ENCODE measurements at regions of chr6 and their contacts with region 1.

Region 1: DNA sequence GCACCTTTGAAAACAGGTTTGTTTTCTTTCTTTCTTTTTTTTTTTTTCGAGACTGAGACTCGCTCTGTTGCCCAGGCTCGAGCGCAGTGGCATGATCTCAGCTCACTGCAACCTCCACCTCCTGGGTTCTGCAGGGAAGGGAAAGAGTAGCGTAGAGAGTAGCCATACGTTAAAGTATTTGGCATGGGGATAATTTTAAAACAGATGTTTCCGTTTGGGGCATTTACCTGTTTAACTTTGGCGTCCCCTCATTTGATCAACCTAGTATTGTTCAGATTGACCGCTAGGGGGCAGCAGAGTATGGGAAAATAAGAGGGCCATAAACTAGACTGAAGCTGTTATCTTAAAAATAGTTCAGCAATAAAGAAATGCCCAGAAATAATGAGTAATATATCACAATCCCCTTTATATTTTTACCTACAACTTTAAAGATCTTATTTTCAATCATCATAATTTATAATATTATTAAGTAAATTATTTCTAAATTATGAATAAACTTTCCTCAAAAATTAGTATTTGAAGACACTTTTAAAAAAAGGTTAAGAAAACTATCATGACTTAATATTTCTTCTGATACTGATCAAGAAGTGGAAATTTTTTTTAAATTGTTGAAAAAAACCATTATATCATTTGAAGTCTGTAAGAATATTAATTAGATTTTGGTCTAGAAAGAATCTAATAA is 7.6 kb upstream of the TAAR9 start:
- DNase-seq: peak in 37 of 42 donors; percentile 24 to 91 (median 72)

Region 2: GRCh38 chr6:132715204-132715603 is 184.8 kb after region 1 on chr6:
- intact Hi-C with region 1: loop called (anchors 5 kb)
- DNase-seq: peak; percentile 9 to 87 (median 70)

Region 3: DNA sequence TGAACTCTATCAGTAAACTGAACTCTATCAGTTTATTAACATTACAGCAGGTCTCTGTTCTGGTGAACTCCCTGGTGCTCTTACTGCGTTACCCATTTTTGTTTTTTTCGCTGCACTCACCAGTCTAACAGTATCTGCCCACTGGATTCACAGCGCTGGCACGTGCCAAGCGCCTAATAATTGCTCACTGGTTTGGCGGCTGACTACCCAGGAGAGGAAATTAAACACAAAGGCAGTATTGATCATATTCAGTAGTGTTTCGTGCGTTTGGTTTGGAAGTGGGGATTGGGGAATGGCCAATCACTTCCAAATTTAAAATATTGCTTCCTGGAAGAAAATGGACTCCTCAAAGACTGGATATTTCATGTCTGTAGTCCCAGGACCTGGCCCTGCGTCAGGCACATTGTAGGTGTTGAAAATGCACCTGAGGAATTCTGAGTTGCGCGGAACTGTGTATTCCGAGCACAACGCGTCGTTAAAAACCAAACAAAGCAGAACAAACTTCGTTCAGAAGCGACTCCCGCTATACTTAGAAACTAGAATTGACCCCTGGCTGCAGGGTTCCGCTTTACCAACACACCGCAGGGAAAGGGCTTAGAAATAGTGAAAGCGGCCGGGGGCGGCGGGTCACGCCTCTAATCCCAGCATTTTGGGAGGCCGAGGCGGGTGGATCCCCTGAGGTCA is 282.9 kb after region 1 on chr6:
- intact Hi-C with region 1: loop called (anchors 10 kb)
- DNase-seq: peak in 40 of 42 donors; percentile 15 to 74 (median 48)

Measured in head of caudate nucleus (tissue), 42 donors.